ENCODE measurements at regions of chr6 and their contacts with region 1.

Region 1: DNA sequence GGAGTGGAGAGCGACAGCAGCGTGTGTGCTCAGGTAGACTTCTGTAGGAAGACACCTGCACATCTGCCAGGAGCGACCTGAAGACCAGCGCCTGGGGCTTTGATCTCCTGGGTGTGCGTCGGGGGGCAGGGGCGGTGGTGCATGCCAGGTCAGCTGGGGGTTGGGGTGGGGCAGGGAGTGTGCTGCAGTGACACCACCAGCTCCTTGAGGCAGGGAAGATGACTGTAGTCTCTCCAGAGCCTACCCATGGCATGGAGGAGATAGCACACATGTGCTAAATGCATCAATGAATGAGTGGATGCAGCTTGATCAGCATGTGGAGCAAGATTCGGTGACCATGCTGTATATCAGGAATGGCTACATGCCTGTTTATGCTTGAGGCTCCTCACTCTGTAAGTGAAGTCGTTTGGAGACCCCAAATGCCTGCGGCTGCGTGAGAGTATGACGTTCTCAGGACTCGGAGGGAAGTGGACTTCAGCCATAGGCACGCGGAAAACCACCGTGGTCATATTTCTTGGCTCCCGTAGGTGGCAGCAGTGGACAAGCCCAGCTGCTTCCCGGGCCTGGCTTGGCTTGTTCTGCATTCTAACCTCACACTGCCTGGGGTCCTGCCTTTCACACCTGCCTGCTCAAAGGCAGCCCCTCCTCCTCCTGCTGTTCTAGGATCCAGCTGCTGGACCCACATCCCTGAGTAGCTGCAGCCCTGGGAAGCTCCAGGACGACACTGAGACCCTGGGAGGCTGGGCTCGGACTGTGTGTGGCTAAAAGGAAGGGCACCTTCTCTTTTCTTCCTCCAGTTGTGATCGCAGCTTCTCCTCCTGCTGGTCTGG is 39.4 kb upstream of the KCNK16 start:
- DNase-seq: peak; percentile 86
- CTCF ChIP-seq: peak; percentile 66

Region 2: DNA sequence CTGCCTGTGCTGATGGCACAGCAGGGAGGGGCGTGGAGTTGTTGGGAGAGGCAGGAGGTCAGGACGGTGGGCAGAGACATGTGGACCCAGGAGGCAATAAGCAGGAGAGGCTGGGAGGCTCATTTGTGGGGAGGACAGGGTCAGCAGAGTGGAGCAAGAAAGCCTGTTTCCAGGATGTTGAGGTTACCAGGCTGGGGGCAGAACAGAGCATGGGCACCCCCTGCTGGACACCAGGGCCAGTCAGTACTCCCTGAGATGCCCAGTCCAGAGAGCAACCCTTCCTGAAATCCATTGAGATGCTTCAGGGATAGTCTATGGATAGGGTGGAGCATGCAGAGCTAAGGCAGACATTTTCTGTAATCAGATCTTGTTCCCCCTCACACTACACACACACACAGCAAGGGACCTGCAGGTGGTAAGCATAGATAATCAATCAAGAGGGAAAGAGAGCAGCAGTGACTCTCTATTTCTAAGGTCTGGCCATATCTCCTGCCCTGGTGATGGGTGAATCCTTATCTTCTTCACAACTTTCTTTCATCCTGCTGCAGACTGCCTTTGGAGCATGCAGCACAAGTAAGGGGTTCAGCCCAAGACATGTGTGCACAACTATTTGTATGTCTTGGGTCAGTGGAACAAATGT is 530.7 kb after region 1 on chr6:
- in situ Hi-C with region 1: loop called (anchors 25 kb)
- DNase-seq: peak; percentile 64
- CTCF ChIP-seq: peak; percentile 28

Region 3: DNA sequence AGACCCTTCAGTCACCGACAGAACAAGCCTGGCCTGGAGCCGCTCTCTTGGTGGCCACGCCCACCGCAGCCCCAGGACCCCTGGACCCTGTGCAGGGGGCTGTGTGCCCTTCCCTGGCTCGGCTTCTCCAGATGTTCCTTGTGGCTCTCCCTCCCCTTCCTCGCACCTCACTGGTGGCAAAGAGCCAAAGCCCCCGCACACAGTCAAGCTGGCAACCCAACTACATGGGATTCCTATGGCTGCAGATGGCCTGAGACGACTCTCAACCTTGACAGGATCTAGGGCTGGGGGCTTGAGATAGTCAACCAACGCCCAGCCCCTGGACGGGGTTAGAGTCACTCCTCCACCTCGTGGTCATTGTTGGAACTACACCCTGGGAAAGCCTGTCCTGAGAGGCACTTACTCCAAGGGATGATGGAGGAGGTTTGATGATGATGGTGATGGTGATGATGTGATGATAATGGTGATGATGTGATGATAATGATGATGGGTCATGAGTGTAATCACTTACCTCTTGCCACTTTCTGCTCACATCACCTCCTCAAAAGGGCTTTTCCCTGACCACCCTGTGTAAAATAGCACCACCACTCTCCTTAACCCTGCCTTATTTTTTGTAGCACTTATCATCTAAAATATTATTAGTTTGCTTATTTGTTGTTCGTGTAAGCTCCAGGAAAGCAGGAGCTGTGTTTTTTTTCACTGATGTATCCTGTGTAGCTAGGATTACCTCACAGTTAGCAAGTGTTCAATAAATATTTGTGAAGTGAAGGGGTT is 946.8 kb after region 1 on chr6:
- in situ Hi-C with region 1: loop called (anchors 25 kb)
- DNase-seq: peak; percentile 78
- CTCF ChIP-seq: peak; percentile 90